ENCODE measurements at regions of chr1 and their contacts with region 1.

Region 1: DNA sequence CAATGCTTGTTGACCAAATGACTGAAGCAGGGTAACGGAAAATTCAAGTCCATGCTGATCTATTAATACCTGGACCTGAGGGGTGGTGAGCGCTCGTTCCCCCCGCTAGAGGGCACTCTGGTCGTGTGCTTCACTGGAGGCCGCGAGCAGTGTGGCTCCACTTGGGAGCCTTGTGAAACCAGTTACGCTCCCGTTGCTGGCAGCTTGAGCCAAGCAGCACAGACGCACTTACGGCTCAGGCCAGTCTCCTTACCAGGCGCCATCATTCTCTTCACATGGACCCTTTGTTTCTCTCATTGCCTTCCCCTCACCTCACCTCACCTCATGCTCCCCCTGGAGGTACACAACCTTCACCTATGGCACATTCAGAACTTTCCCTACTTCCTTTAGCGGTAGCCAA is 49.7 kb upstream of the TSPAN2 start:
- DNase-seq: peak; percentile 80 to 91 (median 87)
- H3K4me3 ChIP-seq: peak overlapping the region in 1 of 7 experiments; percentile 60
- H3K27ac ChIP-seq: no peak overlapping the region
- H3K4me1 ChIP-seq: peaks cover 0 to 9% (median 2%) of the 10 kb centered on the region in 4 experiments
- H3K27me3 ChIP-seq: no peaks in the 10 kb centered on the region

Region 2: GRCh38 chr1:115123116-115123515 is 15.9 kb before region 1 on chr1:
- CTCF ChIA-PET with region 1: interaction called, 16 read pairs
- POLR2A ChIA-PET with region 1: interaction called, 7 read pairs
- DNase-seq: no peak
- H3K4me3 ChIP-seq: no peak overlapping the region
- H3K27ac ChIP-seq: no peak overlapping the region
- H3K4me1 ChIP-seq: no peaks in the 10 kb centered on the region
- H3K27me3 ChIP-seq: no peaks in the 10 kb centered on the region

Region 3: GRCh38 chr1:115340879-115341278 is 201.9 kb after region 1 on chr1:
- CTCF ChIA-PET with region 1: no interaction called
- POLR2A ChIA-PET with region 1: no interaction called
- DNase-seq: no peak
- H3K4me3 ChIP-seq: no peak overlapping the region
- H3K27ac ChIP-seq: no peak overlapping the region
- H3K4me1 ChIP-seq: peaks cover 0 to 15% (median 9%) of the 10 kb centered on the region in 4 experiments
- H3K27me3 ChIP-seq: peaks cover 2 to 55% (median 34%) of the 10 kb centered on the region in 5 experiments

Region 4: GRCh38 chr1:115506926-115507589 is 368.1 kb after region 1 on chr1:
- CTCF ChIA-PET with region 1: interaction called, 17 read pairs
- POLR2A ChIA-PET with region 1: no interaction called
- DNase-seq: peak; percentile 30 to 39 (median 39)
- H3K4me3 ChIP-seq: no peak overlapping the region
- H3K27ac ChIP-seq: no peak overlapping the region
- H3K4me1 ChIP-seq: peaks cover 14 to 41% (median 19%) of the 10 kb centered on the region in 4 experiments
- H3K27me3 ChIP-seq: no peaks in the 10 kb centered on the region

Region 5: DNA sequence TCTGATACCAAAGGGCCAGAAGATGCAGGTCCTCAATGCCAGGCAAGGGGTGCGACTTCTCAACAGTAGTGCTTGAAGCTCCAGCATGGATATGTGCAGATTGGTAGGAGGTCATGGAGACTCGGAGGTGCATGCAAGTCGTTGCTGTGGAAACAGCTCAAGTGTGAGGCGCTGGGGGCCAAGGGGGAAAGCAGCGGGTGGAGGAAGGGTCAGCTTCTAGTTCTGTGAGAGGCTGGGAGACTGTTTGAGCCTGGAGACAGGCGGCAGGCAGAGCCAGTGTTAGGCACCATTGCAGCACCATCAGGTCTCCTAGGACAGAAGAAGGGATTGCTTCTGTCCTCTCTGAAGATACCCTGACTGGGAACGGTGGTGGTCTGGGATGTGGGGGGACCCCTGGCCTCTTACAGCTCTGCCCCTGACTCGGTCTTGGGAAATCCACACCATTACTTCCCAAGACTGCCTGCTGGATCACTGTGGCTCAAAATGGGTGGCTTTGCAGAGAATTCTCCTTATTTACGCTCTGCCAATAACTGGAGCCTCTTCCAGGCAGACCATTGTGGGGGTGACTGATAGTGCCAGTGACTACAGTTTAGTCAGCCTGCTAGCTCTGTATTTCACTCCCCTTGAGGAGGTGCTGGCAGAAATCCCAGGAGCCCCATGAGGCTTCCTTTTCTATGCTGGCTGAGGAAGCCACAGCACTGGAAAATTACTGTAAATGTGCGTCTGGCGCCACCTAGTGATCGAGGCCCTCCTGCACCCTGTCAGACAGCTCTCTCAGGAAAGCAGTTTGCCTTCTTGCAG is 456.5 kb after region 1 on chr1:
- CTCF ChIA-PET with region 1: interaction called, 150 read pairs
- POLR2A ChIA-PET with region 1: no interaction called
- DNase-seq: peak; percentile 72 to 86 (median 80)
- H3K4me3 ChIP-seq: no peak overlapping the region
- H3K27ac ChIP-seq: no peak overlapping the region
- H3K4me1 ChIP-seq: peaks cover 0 to 4% (median 0%) of the 10 kb centered on the region in 4 experiments
- H3K27me3 ChIP-seq: no peaks in the 10 kb centered on the region

Measured in common myeloid progenitor, CD34-positive (primary cell).